Common myeloid progenitor, CD34-positive (primary cell): ENCODE measurements at regions of chr10 and their contacts with region 1.

Region 1: DNA sequence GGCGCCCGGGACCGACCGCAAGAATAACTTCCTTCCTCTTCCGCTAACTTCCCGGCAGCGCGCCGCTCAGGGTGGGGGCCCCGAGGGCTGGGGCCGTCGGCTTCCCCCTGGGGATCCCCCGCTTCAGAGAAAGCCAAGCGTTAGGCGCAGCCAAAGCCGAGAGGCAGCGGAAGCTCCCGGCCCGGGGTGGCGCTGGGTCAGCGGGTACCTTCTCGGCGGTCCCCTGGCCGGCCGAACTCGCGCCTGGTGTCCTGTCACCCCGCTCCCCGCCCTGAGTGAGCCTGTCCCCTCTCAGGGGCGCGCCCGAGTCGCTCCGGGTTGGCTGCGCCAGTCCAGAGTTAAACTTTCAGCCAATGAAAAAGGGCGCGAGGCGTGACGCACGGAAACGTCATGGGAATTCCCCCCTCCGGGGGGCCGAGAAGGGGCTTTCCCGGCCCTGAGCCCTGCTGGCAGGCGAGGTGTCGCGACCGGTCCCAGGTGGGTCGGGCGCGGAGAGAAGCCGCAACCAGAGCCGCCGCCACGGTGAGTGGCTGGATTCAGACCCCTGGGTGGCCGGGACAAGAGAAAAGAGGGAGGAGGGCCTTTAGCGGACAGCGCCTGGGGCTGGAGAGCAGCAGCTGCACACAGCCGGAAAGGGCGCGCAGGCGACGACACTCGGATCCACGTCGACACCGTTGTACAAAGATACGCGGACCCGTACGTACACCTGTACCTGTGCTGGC is 1.3 kb upstream of the NFKB2 start:
- DNase-seq: peak; percentile 97 to 98 (median 97)
- H3K4me3 ChIP-seq: peak overlapping the region; percentile 57 to 95 (median 74)
- H3K27ac ChIP-seq: peak overlapping the region; percentile 90 to 97
- H3K4me1 ChIP-seq: peaks cover 2 to 34% (median 32%) of the 10 kb centered on the region in 4 experiments
- H3K27me3 ChIP-seq: peaks cover 0 to 12% (median 2%) of the 10 kb centered on the region in 5 experiments

Region 2: GRCh38 chr10:102384053-102384452 is 10.2 kb before region 1 on chr10:
- CTCF ChIA-PET with region 1: interaction called, 45 read pairs
- POLR2A ChIA-PET with region 1: interaction called, 4 read pairs
- DNase-seq: peak in 1 of 3 donors; percentile 51
- H3K4me3 ChIP-seq: no peak overlapping the region
- H3K27ac ChIP-seq: no peak overlapping the region
- H3K4me1 ChIP-seq: no peaks in the 10 kb centered on the region
- H3K27me3 ChIP-seq: no peaks in the 10 kb centered on the region

Region 3: GRCh38 chr10:102408728-102409603 is 14.7 kb after region 1 on chr10:
- CTCF ChIA-PET with region 1: interaction called, 28 read pairs
- POLR2A ChIA-PET with region 1: interaction called, 31 read pairs
- DNase-seq: peak in 2 of 3 donors; percentile 76 to 83
- H3K4me3 ChIP-seq: peak overlapping the region; percentile 30 to 77 (median 65)
- H3K27ac ChIP-seq: no peak overlapping the region
- H3K4me1 ChIP-seq: peaks cover 0 to 30% (median 22%) of the 10 kb centered on the region in 4 experiments
- H3K27me3 ChIP-seq: peaks cover 0 to 40% (median 28%) of the 10 kb centered on the region in 5 experiments